Ovary (tissue), 10 donors: ENCODE measurements at regions of chr3 and their contacts with region 1.

Region 1: DNA sequence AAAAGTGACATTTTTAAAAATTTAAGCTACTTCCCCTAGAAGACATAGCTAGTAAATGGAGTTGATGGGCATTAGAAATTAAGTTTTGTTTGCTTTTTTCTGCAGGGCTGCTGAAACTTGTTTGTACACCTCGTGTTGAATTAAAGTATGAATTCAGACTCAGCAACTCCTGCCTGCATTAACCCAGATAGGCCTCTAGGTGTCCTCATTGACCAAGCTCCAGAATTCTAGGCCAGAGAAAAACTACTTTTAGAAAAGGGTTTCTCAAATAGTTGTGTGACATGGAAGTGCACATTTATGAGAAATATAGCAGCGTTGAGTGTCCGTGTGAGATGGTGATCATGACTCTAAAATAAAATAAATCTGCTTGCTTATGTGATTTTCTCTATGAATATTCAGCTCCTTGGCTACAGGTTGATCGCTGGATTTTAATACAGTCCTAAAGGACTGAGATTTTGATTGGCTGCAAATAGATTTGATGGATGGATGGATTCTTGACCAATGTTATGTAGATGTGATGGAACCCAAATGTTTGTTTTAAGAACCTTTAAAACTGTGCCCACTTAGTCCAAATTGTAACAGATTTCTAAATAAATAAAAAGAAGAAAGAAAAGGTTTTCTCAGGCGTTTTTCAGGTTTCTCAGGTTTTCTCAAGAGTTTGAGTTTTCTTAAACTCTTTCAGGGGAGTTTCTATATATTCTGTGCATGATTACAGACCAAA is 39.4 kb upstream of the LMOD3 start:
- DNase-seq: peak in 3 of 5 donors; percentile 11 to 46 (median 35)
- H3K4me3 ChIP-seq: no peak overlapping the region
- H3K27ac ChIP-seq: no peak overlapping the region
- H3K4me1 ChIP-seq: no peaks in the 10 kb centered on the region
- H3K27me3 ChIP-seq: no peaks in the 10 kb centered on the region
- CTCF ChIP-seq: peak; percentile 71 to 93 (median 88)
- EP300 ChIP-seq: no peak
- POLR2A ChIP-seq: no peak

Region 2: GRCh38 chr3:69306239-69307185 is 144.8 kb after region 1 on chr3:
- intact Hi-C with region 1: loop called in 2 of 4 experiments (anchors 5 to 10 kb)
- DNase-seq: peak; percentile 76 to 87 (median 79)
- H3K4me3 ChIP-seq: peak overlapping the region; percentile 10
- H3K27ac ChIP-seq: peak overlapping the region; percentile 54 to 87
- H3K4me1 ChIP-seq: no peaks in the 10 kb centered on the region
- H3K27me3 ChIP-seq: no peaks in the 10 kb centered on the region
- CTCF ChIP-seq: peak; percentile 84 to 94 (median 92)
- EP300 ChIP-seq: no peak
- POLR2A ChIP-seq: no peak

Region 3: GRCh38 chr3:69410250-69410649 is 248.5 kb after region 1 on chr3:
- intact Hi-C with region 1: loop called in 2 of 4 experiments (anchors 10 kb)
- DNase-seq: peak; percentile 44 to 73 (median 58)
- H3K4me3 ChIP-seq: no peak overlapping the region
- H3K27ac ChIP-seq: no peak overlapping the region
- H3K4me1 ChIP-seq: no peaks in the 10 kb centered on the region
- H3K27me3 ChIP-seq: no peaks in the 10 kb centered on the region
- CTCF ChIP-seq: peak; percentile 30 to 68 (median 35)
- EP300 ChIP-seq: no peak
- POLR2A ChIP-seq: no peak

Region 4: GRCh38 chr3:69425261-69425660 is 263.5 kb after region 1 on chr3:
- intact Hi-C with region 1: loop called in 2 of 4 experiments (anchors 5 to 10 kb)
- DNase-seq: peak in 1 of 5 donors; percentile 28
- H3K4me3 ChIP-seq: no peak overlapping the region
- H3K27ac ChIP-seq: no peak overlapping the region
- H3K4me1 ChIP-seq: no peaks in the 10 kb centered on the region
- H3K27me3 ChIP-seq: no peaks in the 10 kb centered on the region
- CTCF ChIP-seq: peak in 2 of 3 donors; percentile 33 to 49
- EP300 ChIP-seq: no peak
- POLR2A ChIP-seq: no peak

Region 5: DNA sequence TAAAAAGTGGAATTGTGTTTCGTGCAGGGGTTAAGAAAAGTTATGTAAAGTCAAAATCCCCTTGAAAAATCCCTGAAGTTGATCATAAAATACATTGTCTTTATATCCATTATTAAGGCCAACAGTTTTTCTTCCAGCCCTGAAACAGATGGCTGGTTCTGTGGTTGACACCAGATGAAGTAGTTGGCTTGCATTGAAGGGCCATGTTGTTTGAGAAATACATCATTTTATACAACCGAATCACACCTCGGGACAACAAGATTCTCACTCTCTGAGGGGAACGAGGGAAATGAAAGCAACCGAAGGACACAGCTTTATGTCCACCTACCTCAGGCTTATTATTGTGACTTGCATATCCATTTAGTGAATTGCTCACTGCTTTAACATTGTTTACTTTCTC is 451.5 kb after region 1 on chr3:
- intact Hi-C with region 1: no loop called
- DNase-seq: no peak
- H3K4me3 ChIP-seq: no peak overlapping the region
- H3K27ac ChIP-seq: no peak overlapping the region
- H3K4me1 ChIP-seq: no peaks in the 10 kb centered on the region
- H3K27me3 ChIP-seq: no peaks in the 10 kb centered on the region
- CTCF ChIP-seq: no peak
- EP300 ChIP-seq: no peak
- POLR2A ChIP-seq: no peak

Region 6: GRCh38 chr3:69671082-69671952 is 509.6 kb after region 1 on chr3:
- intact Hi-C with region 1: loop called in 3 of 4 experiments (anchors 2 to 5 kb)
- DNase-seq: peak in 1 of 5 donors; percentile 43
- H3K4me3 ChIP-seq: no peak overlapping the region
- H3K27ac ChIP-seq: no peak overlapping the region
- H3K4me1 ChIP-seq: no peaks in the 10 kb centered on the region
- H3K27me3 ChIP-seq: no peaks in the 10 kb centered on the region
- CTCF ChIP-seq: peak; percentile 61 to 68 (median 64)
- EP300 ChIP-seq: no peak
- POLR2A ChIP-seq: no peak